ENCODE measurements at regions of chr3 and their contacts with region 1.

Region 1: GRCh38 chr3:183188895-183189462 is 26.4 kb upstream of the LAMP3 start:
- DNase-seq: peak; percentile 69
- H3K4me3 Mint-ChIP-seq: no peak overlapping the region
- H3K27ac Mint-ChIP-seq: no peak overlapping the region
- H3K4me1 Mint-ChIP-seq: peaks cover 7% of the 10 kb centered on the region
- H3K27me3 Mint-ChIP-seq: peaks cover 5% of the 10 kb centered on the region
- CTCF ChIP-seq: peak; percentile 55

Region 2: DNA sequence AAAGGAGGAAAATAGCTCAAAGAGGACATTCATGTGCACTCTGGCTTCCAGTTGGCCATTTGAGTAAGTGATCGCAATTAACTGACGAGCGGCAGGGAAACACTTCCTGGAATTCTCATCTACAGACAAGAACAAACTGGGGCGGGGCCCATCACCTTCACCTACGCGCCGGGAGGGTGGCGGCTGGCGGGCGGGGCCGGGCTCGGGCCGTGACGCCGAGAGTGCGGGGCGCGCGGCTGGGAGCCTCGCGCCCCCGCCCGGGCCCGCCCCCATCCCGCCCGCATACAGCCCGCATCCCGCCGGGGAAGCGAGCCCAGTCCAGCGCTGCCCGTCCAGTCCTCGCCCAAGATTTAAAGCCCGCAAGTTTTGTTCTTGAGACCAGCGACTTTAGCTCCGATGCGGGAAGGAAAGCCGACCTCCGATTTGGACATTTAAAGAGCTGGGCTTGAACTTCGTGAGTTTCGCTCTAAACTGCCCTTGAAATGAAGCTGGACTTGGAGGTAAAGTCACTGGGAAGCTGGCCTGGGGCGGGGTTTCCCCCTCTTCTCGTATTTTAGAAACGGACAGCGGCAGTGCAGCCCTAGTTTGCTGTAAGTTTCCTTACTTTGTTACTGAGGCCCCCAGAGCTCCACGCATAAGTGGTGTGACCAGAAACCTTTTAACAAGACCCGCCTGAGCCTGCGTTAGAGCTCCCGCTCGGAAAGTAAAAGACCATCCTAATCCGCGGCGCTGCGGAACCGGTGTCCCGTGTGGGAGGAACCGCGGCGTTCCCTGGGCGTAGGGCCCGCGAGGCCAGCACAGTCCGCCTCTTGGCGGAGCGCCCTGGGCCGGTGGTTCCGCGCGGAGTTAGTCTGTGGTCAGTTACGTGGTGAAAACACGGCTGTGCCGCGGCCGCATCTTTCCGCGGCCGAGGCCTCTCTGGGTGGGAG is 64.3 kb after region 1 on chr3 and contains the start of gene B3GNT5:
- CTCF ChIA-PET with region 1: interaction called, 11 read pairs
- intact Hi-C with region 1: loop called (anchors 2 kb)
- DNase-seq: peak; percentile 91
- H3K4me3 Mint-ChIP-seq: peak within 1 kb of the TSS; percentile 84
- H3K27ac Mint-ChIP-seq: peak within 1 kb of the TSS; percentile 55
- H3K4me1 Mint-ChIP-seq: peaks cover 30% of the 10 kb centered on the region
- H3K27me3 Mint-ChIP-seq: no peaks in the 10 kb centered on the region
- CTCF ChIP-seq: no peak
- total RNA-seq, gene B3GNT5: 42.9 and 43.6 TPM in 2 replicates

Region 3: GRCh38 chr3:183369117-183369516 is 180.1 kb after region 1 on chr3:
- CTCF ChIA-PET with region 1: interaction called, 11 read pairs
- intact Hi-C with region 1: no loop called
- DNase-seq: no peak
- H3K4me3 Mint-ChIP-seq: no peak overlapping the region
- H3K27ac Mint-ChIP-seq: peak overlapping the region; percentile 90
- H3K4me1 Mint-ChIP-seq: peaks cover 56% of the 10 kb centered on the region
- H3K27me3 Mint-ChIP-seq: no peaks in the 10 kb centered on the region
- CTCF ChIP-seq: no peak

Measured in Calu3 (cell line).